CD8-positive, alpha-beta T cell (primary cell): ENCODE measurements at regions of chr3 and their contacts with region 1.

Region 1: GRCh38 chr3:99817437-99818240 is at the start of gene CMSS1:
- DNase-seq: peak; percentile 89 to 99 (median 96)
- ATAC-seq: peak; percentile 84
- H3K4me3 ChIP-seq: peak within 1 kb of the TSS; percentile 55 to 79
- H3K4me3 Mint-ChIP-seq: peak within 1 kb of the TSS; percentile 96
- H3K27ac ChIP-seq: peak within 1 kb of the TSS; percentile 90 to 95
- H3K27ac Mint-ChIP-seq: peak within 1 kb of the TSS; percentile 100
- H3K4me1 ChIP-seq: peaks cover 20% of the 10 kb centered on the region
- H3K4me1 Mint-ChIP-seq: peaks cover 41% of the 10 kb centered on the region
- H3K27me3 ChIP-seq: no peaks in the 10 kb centered on the region
- H3K27me3 Mint-ChIP-seq: no peaks in the 10 kb centered on the region
- CTCF ChIP-seq: no peak
- total RNA-seq, gene CMSS1: 9.0 to 13.7 TPM

Region 2: DNA sequence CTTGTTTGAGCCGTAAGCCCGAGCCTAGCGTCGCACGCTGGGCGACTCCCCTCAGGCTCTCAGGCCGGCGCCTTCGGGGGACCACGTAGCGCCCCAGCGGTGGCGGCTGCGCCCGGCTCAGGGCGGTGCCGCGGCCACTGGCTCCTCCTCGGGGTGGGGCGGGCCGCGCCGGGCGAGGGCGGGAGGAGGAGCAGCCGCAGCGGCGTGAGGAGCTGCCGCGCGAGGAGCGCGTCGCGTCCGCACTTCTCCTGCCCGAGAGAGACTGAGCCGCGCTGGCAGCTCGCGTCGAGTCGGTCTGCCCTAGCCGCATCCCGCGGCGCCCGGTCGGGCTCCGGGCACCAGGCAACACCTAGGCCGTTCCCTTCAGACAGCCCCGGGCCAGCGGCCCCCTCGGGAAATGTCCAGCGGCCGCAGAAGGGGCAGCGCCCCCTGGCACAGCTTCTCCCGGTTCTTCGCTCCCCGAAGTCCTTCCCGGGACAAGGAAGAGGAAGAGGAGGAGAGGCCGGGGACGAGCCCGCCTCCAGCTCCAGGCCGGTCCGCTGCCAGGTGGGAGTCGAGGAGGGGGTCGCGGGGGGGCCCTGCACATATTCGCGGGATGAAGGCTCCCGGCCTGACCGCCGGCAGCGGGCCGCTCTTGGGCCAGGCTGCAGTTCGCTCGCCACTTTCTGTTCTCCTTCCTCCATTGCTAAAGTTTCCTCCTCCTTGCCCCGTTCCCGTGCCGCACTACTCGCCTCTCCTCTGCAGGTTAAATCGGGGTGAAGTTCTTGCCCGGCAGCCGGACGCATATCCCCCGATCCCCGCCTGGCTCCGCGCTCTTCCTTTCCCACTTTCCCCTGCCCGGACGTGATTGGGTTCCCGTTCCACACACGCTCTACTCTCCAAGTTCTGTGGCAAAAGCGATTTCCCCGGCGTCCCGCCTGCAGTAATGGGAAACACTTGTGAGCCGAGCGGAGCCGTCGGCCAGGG is 1995.5 kb before region 1 on chr3 and contains the start of gene CRYBG3:
- CTCF ChIA-PET with region 1: no interaction called
- POLR2A ChIA-PET with region 1: no interaction called
- intact Hi-C with region 1: loop called in 1 of 2 experiments (anchors 5 kb)
- DNase-seq: peak; percentile 63 to 90 (median 78)
- ATAC-seq: peak; percentile 98
- H3K4me3 ChIP-seq: peak within 1 kb of the TSS; percentile 61 to 75
- H3K4me3 Mint-ChIP-seq: peak within 1 kb of the TSS; percentile 95
- H3K27ac ChIP-seq: peak within 1 kb of the TSS; percentile 11 to 28
- H3K27ac Mint-ChIP-seq: peak within 1 kb of the TSS; percentile 81
- H3K4me1 ChIP-seq: peaks cover 11% of the 10 kb centered on the region
- H3K4me1 Mint-ChIP-seq: peaks cover 21% of the 10 kb centered on the region
- H3K27me3 ChIP-seq: no peaks in the 10 kb centered on the region
- H3K27me3 Mint-ChIP-seq: peaks cover 13% of the 10 kb centered on the region
- CTCF ChIP-seq: no peak
- total RNA-seq, gene CRYBG3: 1.00 to 1.1 TPM

Region 3: GRCh38 chr3:98901392-98902350 is 916.0 kb before region 1 on chr3 and contains the start of gene DCBLD2:
- CTCF ChIA-PET with region 1: no interaction called
- POLR2A ChIA-PET with region 1: no interaction called
- intact Hi-C with region 1: loop called (anchors 1 to 5 kb)
- DNase-seq: peak; percentile 75 to 96 (median 87)
- ATAC-seq: peak; percentile 97
- H3K4me3 ChIP-seq: peak within 1 kb of the TSS; percentile 62 to 91
- H3K4me3 Mint-ChIP-seq: peak within 1 kb of the TSS; percentile 94
- H3K27ac ChIP-seq: peak within 1 kb of the TSS; percentile 37 to 46
- H3K27ac Mint-ChIP-seq: peak within 1 kb of the TSS; percentile 73
- H3K4me1 ChIP-seq: peaks cover 15% of the 10 kb centered on the region
- H3K4me1 Mint-ChIP-seq: peaks cover 24% of the 10 kb centered on the region
- H3K27me3 ChIP-seq: no peaks in the 10 kb centered on the region
- H3K27me3 Mint-ChIP-seq: peaks cover 11% of the 10 kb centered on the region
- CTCF ChIP-seq: no peak
- total RNA-seq, gene DCBLD2: 1.6 to 1.8 TPM

Region 4: DNA sequence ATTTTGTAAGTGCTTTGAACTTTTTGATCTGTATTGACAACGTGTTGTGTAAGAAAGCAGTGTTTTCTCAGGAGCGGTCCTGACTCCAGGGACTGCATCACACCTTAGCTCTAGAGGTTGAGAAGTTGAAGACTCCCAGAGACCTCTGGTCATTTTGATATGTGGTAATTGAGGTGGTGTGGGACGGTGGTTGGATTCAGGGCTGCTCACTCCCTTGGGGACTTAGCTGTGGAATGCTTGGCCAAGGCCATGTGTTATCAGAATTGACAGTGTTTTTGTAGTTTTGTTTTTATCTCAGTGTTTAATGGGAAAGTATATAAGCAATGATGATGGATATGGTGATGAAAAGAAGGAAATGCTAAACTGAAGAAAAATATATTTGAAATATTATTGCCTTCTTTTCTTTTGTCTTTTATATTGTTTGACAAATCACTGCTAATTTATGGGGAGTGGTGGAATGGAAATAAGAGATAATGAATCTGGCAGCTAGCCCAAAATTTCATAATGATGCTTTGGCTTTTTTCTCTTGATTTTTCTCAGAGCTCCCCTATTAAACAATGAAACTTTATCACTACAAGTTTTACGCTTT is 16.1 kb after region 1 on chr3:
- CTCF ChIA-PET with region 1: interaction called, 17 read pairs
- POLR2A ChIA-PET with region 1: interaction called, 5 read pairs
- intact Hi-C with region 1: no loop called
- DNase-seq: no peak
- ATAC-seq: no peak
- H3K4me3 ChIP-seq: no peak overlapping the region
- H3K4me3 Mint-ChIP-seq: no peak overlapping the region
- H3K27ac ChIP-seq: no peak overlapping the region
- H3K27ac Mint-ChIP-seq: no peak overlapping the region
- H3K4me1 ChIP-seq: no peaks in the 10 kb centered on the region
- H3K4me1 Mint-ChIP-seq: peaks cover 2% of the 10 kb centered on the region
- H3K27me3 ChIP-seq: no peaks in the 10 kb centered on the region
- H3K27me3 Mint-ChIP-seq: no peaks in the 10 kb centered on the region
- CTCF ChIP-seq: no peak

Region 5: DNA sequence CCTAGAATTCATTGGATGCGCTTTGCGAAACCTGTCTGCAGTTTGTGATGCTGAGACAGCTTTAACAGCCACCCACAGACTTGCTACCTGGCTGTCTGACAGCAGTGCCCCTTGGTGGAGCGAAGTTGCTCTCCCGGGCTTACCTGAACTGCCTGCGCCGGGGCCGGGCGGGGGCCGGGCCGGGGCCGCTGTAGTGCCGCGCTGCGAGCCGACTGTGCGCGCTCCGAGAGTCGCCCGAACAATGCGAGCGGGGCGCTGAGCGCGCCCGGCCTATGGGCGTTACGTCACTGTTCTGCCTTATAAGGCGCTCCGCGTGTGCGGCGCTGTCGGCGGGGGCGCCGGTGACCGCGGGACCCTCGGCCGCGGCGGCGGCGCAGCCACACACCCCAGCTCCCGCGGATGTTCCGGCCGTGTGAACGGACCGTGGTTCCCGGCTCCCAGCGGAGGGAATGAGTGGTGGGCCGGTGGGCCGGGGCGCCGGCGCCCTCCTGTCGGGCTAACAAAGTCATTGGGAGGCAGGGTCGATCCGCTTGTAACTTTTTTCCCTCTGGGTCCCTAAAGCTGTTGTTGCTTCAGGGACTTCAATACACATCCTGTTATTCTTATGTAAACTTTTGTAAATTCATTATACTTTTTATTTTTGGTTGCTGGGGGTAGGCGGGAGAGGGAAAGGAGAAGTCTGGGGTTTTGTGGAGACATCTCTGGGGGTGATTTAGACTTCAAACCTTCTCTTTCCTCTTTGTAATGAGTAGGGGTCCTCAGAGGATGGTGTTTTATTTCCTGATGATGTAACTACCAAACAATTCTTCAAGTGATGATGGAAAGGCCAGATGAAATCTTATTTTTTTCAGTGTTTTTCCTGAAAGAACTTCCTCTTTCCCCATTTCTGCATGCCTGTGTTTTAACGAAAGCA is 58.5 kb after region 1 on chr3:
- CTCF ChIA-PET with region 1: no interaction called
- POLR2A ChIA-PET with region 1: no interaction called
- intact Hi-C with region 1: loop called (anchors 1 to 2 kb)
- DNase-seq: peak; percentile 40 to 81 (median 66)
- ATAC-seq: peak; percentile 92
- H3K4me3 ChIP-seq: peak overlapping the region; percentile 60 to 65
- H3K4me3 Mint-ChIP-seq: peak overlapping the region; percentile 84
- H3K27ac ChIP-seq: peak overlapping the region in 1 of 2 experiments; percentile 32
- H3K27ac Mint-ChIP-seq: peak overlapping the region; percentile 64
- H3K4me1 ChIP-seq: peaks cover 13% of the 10 kb centered on the region
- H3K4me1 Mint-ChIP-seq: peaks cover 17% of the 10 kb centered on the region
- H3K27me3 ChIP-seq: no peaks in the 10 kb centered on the region
- H3K27me3 Mint-ChIP-seq: peaks cover 3% of the 10 kb centered on the region
- CTCF ChIP-seq: no peak

Region 6: DNA sequence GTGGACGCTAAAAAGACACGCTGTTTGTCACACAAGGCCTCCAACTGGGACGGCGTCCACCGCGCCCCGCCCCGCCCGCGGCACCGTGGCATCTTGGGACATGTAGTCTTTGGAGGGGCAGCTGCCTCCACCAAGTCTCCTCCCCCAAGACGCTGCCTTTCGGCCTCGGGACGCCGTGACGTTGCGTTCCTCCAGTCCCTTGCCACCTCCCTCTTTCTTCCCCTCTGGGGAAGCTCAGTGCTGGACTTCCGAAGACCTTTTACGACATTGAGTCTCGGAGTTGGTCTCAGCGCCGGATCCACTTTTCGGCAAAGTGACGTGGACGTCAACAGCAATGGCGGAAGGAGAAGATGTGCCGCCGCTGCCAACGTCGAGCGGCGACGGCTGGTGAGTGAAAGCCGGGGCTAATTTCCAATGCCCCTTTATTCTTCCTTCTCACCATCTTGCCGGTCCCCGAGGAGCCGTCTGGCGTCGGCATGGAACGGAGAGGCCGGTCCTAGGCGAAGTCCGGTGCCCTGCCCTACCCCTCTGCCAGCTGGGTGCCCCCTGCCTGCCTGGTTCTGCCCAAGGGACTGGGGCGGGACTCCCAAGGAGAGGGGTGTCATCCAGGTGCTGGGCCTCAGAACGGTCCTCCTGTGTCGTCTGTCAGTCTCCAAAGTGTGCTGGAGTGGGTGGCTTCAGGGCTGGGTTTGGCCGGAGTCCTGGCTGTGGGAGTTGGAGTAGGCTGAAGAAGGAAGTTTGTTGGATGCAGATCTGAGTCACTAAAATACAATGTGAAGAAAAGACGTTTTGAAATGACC is 443.2 kb after region 1 on chr3 and contains the start of gene TBC1D23:
- CTCF ChIA-PET with region 1: no interaction called
- POLR2A ChIA-PET with region 1: interaction called, 11 read pairs
- intact Hi-C with region 1: loop called in 1 of 2 experiments (anchors 1 kb)
- DNase-seq: peak; percentile 91 to 99 (median 97)
- ATAC-seq: peak; percentile 98
- H3K4me3 ChIP-seq: peak within 1 kb of the TSS; percentile 80 to 90
- H3K4me3 Mint-ChIP-seq: peak within 1 kb of the TSS; percentile 95
- H3K27ac ChIP-seq: peak within 1 kb of the TSS; percentile 91 to 94
- H3K27ac Mint-ChIP-seq: peak within 1 kb of the TSS; percentile 98
- H3K4me1 ChIP-seq: peaks cover 17% of the 10 kb centered on the region
- H3K4me1 Mint-ChIP-seq: peaks cover 60% of the 10 kb centered on the region
- H3K27me3 ChIP-seq: no peaks in the 10 kb centered on the region
- H3K27me3 Mint-ChIP-seq: no peaks in the 10 kb centered on the region
- CTCF ChIP-seq: no peak
- total RNA-seq, gene TBC1D23: 38.9 to 43.9 TPM

Region 7: DNA sequence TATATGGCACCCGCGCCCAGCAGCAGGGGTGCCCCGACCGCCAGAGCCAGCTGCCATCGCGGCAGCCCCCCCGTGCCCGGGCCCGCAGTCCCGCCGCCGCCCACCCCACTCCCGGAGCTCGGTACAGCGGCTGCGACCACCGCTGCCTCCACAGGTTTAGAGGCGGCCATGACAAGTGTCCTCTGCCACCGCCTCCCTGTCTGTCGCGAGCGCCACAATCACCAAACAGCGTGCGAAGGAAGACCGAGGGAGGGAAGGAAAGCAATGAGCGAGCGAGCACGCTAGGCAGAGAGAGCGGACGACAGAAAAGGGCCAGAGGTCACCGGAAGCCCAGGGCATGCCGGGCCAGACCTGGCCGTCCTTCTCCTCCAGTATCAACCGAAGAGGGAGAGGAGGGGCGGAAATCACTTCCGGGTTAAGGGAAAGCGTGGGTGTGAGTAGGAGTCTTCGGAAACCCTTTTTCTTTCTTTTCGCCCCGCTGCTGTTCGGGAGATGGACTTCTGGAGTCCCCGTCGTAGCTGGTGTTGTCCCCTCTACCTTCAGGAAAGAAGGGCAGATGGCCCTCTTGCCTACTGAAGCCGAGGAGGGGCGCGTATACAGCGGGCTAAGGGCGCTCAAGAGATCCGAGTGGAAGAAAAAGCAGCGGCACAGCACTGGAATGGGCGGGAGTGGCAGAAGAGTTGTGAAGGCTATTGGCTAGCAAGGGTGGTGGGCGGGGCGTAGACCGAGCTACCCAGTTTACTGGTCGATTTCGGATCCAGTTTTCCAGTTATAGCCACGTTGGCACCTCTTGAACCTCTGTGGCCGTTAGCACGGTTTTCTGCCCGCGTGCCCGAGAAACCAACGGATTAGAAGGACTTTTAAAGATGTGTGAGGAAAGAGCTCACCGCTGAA is 583.4 kb after region 1 on chr3 and contains the starts of genes LNP1 and TOMM70:
- CTCF ChIA-PET with region 1: no interaction called
- POLR2A ChIA-PET with region 1: interaction called, 5 read pairs
- intact Hi-C with region 1: loop called (anchors 1 to 5 kb)
- DNase-seq: peak; percentile 85 to 97 (median 94)
- ATAC-seq: peak; percentile 85
- H3K4me3 ChIP-seq: peak within 1 kb of the TSS; percentile 76 to 92
- H3K4me3 Mint-ChIP-seq: peak within 1 kb of the TSS; percentile 98
- H3K27ac ChIP-seq: peak within 1 kb of the TSS; percentile 77 to 92
- H3K27ac Mint-ChIP-seq: peak within 1 kb of the TSS; percentile 99
- H3K4me1 ChIP-seq: peaks cover 46% of the 10 kb centered on the region
- H3K4me1 Mint-ChIP-seq: peaks cover 73% of the 10 kb centered on the region
- H3K27me3 ChIP-seq: no peaks in the 10 kb centered on the region
- H3K27me3 Mint-ChIP-seq: no peaks in the 10 kb centered on the region
- CTCF ChIP-seq: no peak
- total RNA-seq, gene LNP1: 1.1 to 1.2 TPM
- total RNA-seq, gene TOMM70: 27.7 to 30.5 TPM

Region 8: DNA sequence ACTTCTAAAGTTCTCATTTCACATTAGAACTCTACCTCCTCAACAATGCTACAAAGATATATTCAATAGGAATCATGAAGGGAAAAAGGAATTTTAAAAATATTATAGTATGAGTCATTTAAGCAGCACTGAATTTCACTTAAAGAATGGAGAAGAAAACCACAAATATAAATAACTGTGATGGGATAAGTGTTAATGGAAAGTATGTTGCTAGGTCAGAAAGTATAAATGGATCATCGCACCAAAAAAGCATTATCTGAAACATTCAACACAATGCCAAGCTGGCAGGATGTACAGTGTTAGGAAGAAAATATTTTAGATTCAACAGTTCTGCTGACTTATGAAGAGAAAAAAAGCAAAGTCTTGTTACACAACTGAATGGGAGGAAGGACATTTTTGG is 993.0 kb after region 1 on chr3:
- CTCF ChIA-PET with region 1: no interaction called
- POLR2A ChIA-PET with region 1: no interaction called
- intact Hi-C with region 1: no loop called
- DNase-seq: no peak
- ATAC-seq: no peak
- H3K4me3 ChIP-seq: no peak overlapping the region
- H3K4me3 Mint-ChIP-seq: no peak overlapping the region
- H3K27ac ChIP-seq: no peak overlapping the region
- H3K27ac Mint-ChIP-seq: no peak overlapping the region
- H3K4me1 ChIP-seq: no peaks in the 10 kb centered on the region
- H3K4me1 Mint-ChIP-seq: no peaks in the 10 kb centered on the region
- H3K27me3 ChIP-seq: no peaks in the 10 kb centered on the region
- H3K27me3 Mint-ChIP-seq: peaks cover 4% of the 10 kb centered on the region
- CTCF ChIP-seq: no peak